ENCODE measurements at regions of chr10 and their contacts with region 1.

Region 1: GRCh38 chr10:63083904-63084689 is 49.0 kb upstream of the NRBF2 start:
- DNase-seq: peak; percentile 24
- H3K4me3 ChIP-seq: no peak overlapping the region
- H3K27ac ChIP-seq: no peak overlapping the region
- H3K4me1 ChIP-seq: no peaks in the 10 kb centered on the region
- H3K27me3 ChIP-seq: no peaks in the 10 kb centered on the region
- CTCF ChIP-seq: peak; percentile 49

Region 2: GRCh38 chr10:62437696-62438095 is 646.4 kb before region 1 on chr10:
- intact Hi-C with region 1: loop called (anchors 10 kb)
- DNase-seq: peak; percentile 31
- H3K4me3 ChIP-seq: no peak overlapping the region
- H3K27ac ChIP-seq: no peak overlapping the region
- H3K4me1 ChIP-seq: no peaks in the 10 kb centered on the region
- H3K27me3 ChIP-seq: no peaks in the 10 kb centered on the region
- CTCF ChIP-seq: peak; percentile 71

Region 3: GRCh38 chr10:62492012-62492869 is 591.9 kb before region 1 on chr10:
- intact Hi-C with region 1: loop called (anchors 10 kb)
- DNase-seq: no peak
- H3K4me3 ChIP-seq: no peak overlapping the region
- H3K27ac ChIP-seq: no peak overlapping the region
- H3K4me1 ChIP-seq: no peaks in the 10 kb centered on the region
- H3K27me3 ChIP-seq: no peaks in the 10 kb centered on the region
- CTCF ChIP-seq: peak; percentile 34

Region 4: DNA sequence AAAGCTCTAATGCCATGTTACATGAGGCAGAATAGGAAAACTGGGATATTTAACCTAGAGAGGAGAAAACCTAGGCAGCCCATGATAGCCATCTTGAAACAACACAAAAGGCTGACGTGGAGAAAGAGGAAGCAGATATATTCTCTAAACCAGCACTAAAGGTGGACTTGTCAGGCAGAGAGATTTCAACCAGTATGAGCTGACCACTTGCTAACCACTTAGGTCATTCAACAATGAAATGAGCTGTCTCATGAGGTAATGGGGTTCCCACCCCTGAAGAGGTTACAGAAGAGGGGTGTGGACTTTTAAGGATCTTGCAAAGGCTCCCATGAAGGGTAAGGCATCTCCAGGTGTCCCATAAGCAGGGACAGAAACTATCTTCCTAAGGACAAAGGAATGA is 241.1 kb before region 1 on chr10:
- intact Hi-C with region 1: loop called (anchors 10 kb)
- DNase-seq: no peak
- H3K4me3 ChIP-seq: no peak overlapping the region
- H3K27ac ChIP-seq: no peak overlapping the region
- H3K4me1 ChIP-seq: no peaks in the 10 kb centered on the region
- H3K27me3 ChIP-seq: no peaks in the 10 kb centered on the region
- CTCF ChIP-seq: no peak

Region 5: DNA sequence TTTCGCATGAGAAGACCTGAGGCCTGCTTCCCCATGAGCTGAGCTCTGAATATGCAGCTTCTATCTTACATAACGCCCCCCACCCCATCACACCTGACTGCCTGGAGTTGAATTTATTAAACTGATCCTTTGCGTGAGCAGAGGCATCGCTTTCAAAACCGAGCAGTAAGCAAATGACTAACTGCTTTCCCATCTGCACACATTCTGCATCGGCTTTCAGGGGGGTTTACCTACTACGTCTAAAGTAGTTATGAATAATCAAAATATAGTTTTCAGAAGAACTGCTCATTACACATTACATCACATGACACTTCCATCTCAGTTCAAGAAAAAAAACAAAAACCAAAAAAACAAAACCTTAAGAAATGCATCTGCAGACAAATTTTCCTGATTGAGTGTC is 213.2 kb before region 1 on chr10:
- intact Hi-C with region 1: no loop called
- DNase-seq: no peak
- H3K4me3 ChIP-seq: no peak overlapping the region
- H3K27ac ChIP-seq: no peak overlapping the region
- H3K4me1 ChIP-seq: no peaks in the 10 kb centered on the region
- H3K27me3 ChIP-seq: no peaks in the 10 kb centered on the region
- CTCF ChIP-seq: no peak

Region 6: DNA sequence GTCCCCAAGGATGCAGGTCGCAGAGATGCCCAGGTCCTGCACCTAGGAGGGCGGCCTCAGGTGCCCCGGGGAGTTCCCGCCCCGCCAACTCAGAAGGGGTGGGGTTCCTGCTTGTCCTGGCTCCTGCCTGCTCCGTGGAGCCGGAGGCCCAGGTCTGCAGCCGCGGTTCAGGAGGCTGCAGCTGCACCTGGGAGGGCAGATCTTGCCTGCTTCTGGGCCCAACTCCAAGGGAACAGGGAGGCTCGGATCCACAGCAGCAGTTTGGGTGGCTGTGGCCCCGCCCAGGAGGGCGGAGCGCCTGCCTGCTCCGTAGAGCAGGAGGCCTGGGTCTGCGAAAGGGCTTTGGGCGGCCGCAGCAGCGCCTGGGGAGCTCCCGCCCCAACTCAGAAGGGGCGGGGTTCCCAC is 159.8 kb before region 1 on chr10:
- intact Hi-C with region 1: no loop called
- DNase-seq: peak; percentile 32
- H3K4me3 ChIP-seq: no peak overlapping the region
- H3K27ac ChIP-seq: no peak overlapping the region
- H3K4me1 ChIP-seq: no peaks in the 10 kb centered on the region
- H3K27me3 ChIP-seq: no peaks in the 10 kb centered on the region
- CTCF ChIP-seq: no peak

Region 7: GRCh38 chr10:62946278-62946677 is 137.8 kb before region 1 on chr10:
- intact Hi-C with region 1: no loop called
- DNase-seq: no peak
- H3K4me3 ChIP-seq: no peak overlapping the region
- H3K27ac ChIP-seq: no peak overlapping the region
- H3K4me1 ChIP-seq: no peaks in the 10 kb centered on the region
- H3K27me3 ChIP-seq: no peaks in the 10 kb centered on the region
- CTCF ChIP-seq: no peak

Region 8: GRCh38 chr10:63166742-63167258 is 82.7 kb after region 1 on chr10:
- intact Hi-C with region 1: no loop called
- DNase-seq: peak; percentile 27
- H3K4me3 ChIP-seq: no peak overlapping the region
- H3K27ac ChIP-seq: no peak overlapping the region
- H3K4me1 ChIP-seq: no peaks in the 10 kb centered on the region
- H3K27me3 ChIP-seq: no peaks in the 10 kb centered on the region
- CTCF ChIP-seq: peak; percentile 80

Measured in colonic mucosa (tissue), 4 donors.